Activated CD4-positive, alpha-beta T cell treated with anti-CD3 and anti-CD28 coated beads for 36 hours (primary cell): ENCODE measurements at regions of chr5 and their contacts with region 1.

Region 1: DNA sequence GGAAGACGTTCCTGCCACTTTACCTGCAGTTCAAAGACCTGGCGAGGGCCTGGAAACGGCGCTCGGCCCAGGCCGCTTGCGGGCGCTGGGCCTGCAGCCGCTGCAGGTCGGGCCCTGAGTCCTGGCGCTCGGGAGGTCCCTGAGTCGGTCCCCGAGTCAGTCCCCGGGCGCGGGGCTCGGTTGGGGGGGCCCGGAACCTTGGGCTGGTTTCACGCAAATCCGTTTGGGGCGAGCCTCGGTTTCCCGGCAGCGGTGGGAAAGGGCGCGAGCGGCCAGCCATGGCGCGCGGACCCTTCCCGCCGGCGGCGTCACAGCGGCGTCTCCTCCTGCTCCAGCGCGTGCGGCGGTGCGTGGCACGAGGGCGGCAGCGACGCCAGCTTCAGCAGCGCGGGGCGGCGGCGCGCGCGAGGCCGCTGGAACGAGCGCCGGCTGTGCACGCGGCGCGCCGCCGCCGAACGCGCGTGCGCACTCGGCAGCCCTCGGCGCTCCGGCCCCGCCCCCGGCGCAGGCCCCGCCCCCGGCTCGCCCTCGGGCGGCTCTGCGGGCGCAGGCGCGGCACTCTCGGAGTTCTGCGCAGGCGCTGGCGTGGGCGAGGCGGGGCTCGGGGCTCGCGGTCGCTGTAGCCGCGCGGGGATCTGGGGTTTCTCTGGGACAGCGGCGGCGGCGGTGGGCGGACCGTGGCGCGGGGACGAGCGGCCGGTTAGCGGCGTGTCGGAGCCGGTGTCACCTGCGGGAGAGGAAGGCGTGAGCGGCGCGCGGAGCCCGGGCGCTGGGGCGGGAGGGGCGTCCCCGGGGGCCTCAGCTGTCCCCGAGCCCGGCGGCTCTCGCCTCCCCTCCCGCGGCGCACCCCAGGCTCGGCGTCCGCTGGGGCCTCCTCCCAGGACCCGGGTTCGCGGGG is 29.9 kb downstream of the EXOC3 start:
- DNase-seq: peak; percentile 93
- ATAC-seq: peak; percentile 80
- H3K4me3 Mint-ChIP-seq: peak overlapping the region; percentile 88
- H3K27ac Mint-ChIP-seq: peak overlapping the region; percentile 93
- H3K4me1 Mint-ChIP-seq: peaks cover 25% of the 10 kb centered on the region
- H3K27me3 Mint-ChIP-seq: peaks cover 4% of the 10 kb centered on the region

Region 2: GRCh38 chr5:217860-218456 is 254.9 kb before region 1 on chr5 and contains the starts of genes CCDC127 and SDHA:
- CTCF ChIA-PET with region 1: no interaction called
- POLR2A ChIA-PET with region 1: no interaction called
- intact Hi-C with region 1: loop called in 1 of 2 experiments (anchors 2 kb)
- DNase-seq: peak; percentile 99
- ATAC-seq: peak; percentile 84
- H3K4me3 Mint-ChIP-seq: peak within 1 kb of the TSS; percentile 94
- H3K27ac Mint-ChIP-seq: peak within 1 kb of the TSS; percentile 89
- H3K4me1 Mint-ChIP-seq: peaks cover 60% of the 10 kb centered on the region
- H3K27me3 Mint-ChIP-seq: no peaks in the 10 kb centered on the region
- total RNA-seq, gene CCDC127: 6.0 to 7.0 TPM
- total RNA-seq, gene SDHA: 104 to 121 TPM

Region 3: GRCh38 chr5:317086-317811 is 155.7 kb before region 1 on chr5:
- CTCF ChIA-PET with region 1: interaction called, 4 read pairs
- POLR2A ChIA-PET with region 1: no interaction called
- intact Hi-C with region 1: loop called in 1 of 2 experiments (anchors 1 kb)
- DNase-seq: peak; percentile 79
- ATAC-seq: peak; percentile 74
- H3K4me3 Mint-ChIP-seq: no peak overlapping the region
- H3K27ac Mint-ChIP-seq: no peak overlapping the region
- H3K4me1 Mint-ChIP-seq: peaks cover 11% of the 10 kb centered on the region
- H3K27me3 Mint-ChIP-seq: peaks cover 11% of the 10 kb centered on the region

Region 4: DNA sequence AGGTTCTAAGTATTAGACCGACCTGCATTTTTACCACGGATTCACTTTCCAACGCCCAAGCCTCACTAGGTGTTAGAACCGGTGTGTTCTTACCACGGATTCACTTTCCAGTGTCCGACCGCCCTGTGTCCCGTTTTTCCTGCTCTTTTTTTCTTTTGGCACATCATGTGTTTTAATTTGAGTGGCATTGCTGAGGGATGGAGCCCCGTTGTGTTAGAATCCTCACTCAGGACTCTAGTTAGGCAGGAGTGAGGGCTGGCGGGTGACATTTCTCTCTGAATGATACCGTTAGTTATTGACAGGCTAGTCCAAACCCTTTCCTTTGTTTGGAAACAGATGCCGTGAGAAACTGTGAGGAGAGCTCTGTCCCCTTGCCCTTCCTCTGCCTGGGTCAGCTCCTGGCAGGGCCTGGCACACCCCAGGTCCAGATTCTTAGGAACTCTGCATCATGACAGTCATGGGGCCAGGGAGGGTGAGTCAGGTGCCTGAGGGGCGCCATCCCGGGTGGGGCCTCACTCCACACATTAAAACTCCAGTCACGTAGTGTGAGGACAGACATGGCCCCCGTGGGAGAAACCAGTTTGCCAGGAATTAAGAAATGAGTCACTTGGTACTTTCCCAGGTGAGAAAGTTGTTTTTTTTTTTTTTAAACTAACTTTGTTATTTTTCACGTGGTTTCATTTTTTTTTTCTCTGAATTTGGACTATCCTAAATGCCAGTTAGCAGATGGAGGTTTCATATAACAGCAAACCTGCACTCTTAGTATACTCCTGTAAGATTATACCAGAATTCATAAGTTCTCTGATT is 14.2 kb before region 1 on chr5:
- CTCF ChIA-PET with region 1: interaction called, 6 read pairs
- POLR2A ChIA-PET with region 1: interaction called, 3 read pairs
- intact Hi-C with region 1: loop called in 1 of 2 experiments (anchors 1 kb)
- DNase-seq: peak; percentile 84
- ATAC-seq: peak; percentile 92
- H3K4me3 Mint-ChIP-seq: peak overlapping the region; percentile 40
- H3K27ac Mint-ChIP-seq: peak overlapping the region; percentile 97
- H3K4me1 Mint-ChIP-seq: peaks cover 72% of the 10 kb centered on the region
- H3K27me3 Mint-ChIP-seq: no peaks in the 10 kb centered on the region

Region 5: DNA sequence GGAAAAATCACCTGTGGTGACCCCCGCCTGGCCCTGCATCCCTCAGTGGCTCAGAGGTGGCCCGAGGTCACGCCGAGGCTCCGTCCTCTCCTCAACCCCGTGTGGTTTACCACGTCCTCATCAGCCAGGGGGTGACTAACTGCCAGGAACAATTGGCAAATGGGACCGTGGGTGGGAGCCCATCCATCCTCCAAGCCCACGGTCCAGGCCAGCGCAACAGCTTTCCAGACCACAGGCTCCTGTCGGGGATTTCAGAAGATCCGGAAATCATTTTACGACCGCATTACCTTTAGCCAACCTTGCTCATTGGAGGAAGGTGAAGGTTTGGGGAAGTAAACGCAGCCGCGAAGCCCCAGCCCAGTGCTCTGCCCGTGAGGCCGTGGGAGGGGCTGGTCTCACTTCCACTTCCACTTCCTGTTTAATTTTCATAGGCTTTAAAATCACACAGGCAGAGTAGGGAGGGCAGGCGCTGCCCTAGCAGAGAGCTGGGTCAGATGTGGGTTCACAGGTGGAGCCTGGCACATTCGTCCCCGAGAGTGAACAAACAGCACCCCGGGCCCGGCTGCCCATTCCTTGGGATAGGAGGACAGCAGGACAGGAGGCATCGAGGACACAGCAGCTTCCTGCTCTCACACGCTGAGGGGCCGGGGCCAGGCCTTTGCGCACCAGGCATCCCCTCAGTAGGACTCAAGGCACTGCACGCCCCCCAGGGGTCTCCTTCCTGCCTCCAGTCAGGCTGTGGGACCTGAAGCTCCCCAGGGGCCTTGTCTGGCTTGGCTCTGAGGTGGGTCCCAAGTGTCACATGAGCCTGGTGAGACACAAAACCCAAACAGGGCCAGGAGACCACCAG is 71.1 kb after region 1 on chr5:
- CTCF ChIA-PET with region 1: no interaction called
- POLR2A ChIA-PET with region 1: no interaction called
- intact Hi-C with region 1: no loop called
- DNase-seq: peak; percentile 73
- ATAC-seq: peak; percentile 78
- H3K4me3 Mint-ChIP-seq: no peak overlapping the region
- H3K27ac Mint-ChIP-seq: peak overlapping the region; percentile 51
- H3K4me1 Mint-ChIP-seq: peaks cover 13% of the 10 kb centered on the region
- H3K27me3 Mint-ChIP-seq: peaks cover 7% of the 10 kb centered on the region

Region 6: GRCh38 chr5:1344975-1345838 is 872.3 kb after region 1 on chr5 and contains the start of gene CLPTM1L:
- CTCF ChIA-PET with region 1: no interaction called
- POLR2A ChIA-PET with region 1: no interaction called
- intact Hi-C with region 1: loop called in 1 of 2 experiments (anchors 10 kb)
- DNase-seq: peak; percentile 93
- ATAC-seq: peak; percentile 96
- H3K4me3 Mint-ChIP-seq: peak within 1 kb of the TSS; percentile 94
- H3K27ac Mint-ChIP-seq: peak within 1 kb of the TSS; percentile 92
- H3K4me1 Mint-ChIP-seq: peaks cover 22% of the 10 kb centered on the region
- H3K27me3 Mint-ChIP-seq: no peaks in the 10 kb centered on the region
- total RNA-seq, gene CLPTM1L: 62.1 to 62.2 TPM